Activated CD4-positive, alpha-beta T cell treated with anti-CD3 and anti-CD28 coated beads, Interleukin-2, amount 10 ng/mL, durations not matched to agents 24 days and 14 days (primary cell): ENCODE measurements at regions of chr11 and their contacts with region 1.

Region 1: DNA sequence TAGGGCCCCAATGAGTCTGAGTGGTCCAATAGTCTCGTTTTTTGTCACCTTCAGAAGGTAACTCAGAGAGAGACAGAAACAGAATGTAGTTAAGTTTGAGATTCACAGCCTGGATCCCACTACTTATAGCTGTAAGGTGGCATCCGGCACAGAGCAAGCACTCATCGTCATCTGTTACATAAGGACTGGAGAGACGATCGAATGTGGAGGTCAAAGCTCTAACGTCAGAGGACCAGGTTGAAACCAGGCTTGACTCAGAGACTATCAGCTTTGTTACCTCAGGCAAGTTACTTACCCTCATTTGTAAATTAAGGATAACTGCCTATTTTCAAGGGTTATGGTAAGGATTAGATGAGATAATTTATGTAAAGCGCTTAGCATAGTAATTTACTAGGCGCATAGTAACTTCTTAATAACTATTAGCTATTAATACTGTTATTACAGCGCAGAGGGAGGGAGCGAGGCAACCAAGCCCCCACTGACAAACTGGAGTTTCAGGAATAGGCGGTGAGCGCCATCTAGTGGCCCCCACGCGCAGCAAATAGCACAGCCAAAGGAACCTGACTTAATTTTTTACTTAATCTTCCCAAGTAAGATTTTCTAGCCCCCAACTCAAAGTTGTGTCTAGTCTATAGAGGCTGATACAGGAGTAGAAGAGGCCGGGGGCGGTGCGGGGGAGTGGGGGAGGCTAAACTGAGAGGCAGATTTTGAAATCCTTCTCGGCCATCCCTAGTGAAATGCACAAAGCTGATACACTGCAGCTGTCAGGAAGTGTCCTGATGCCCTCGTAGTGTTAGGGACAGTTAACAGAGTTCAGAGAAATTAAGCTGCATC is 29.0 kb upstream of the API5 start:
- DNase-seq: peak; percentile 79
- H3K4me3 Mint-ChIP-seq: no peak overlapping the region
- H3K27ac Mint-ChIP-seq: no peak overlapping the region
- H3K4me1 Mint-ChIP-seq: no peaks in the 10 kb centered on the region
- H3K27me3 Mint-ChIP-seq: peaks cover 4% of the 10 kb centered on the region

Region 2: DNA sequence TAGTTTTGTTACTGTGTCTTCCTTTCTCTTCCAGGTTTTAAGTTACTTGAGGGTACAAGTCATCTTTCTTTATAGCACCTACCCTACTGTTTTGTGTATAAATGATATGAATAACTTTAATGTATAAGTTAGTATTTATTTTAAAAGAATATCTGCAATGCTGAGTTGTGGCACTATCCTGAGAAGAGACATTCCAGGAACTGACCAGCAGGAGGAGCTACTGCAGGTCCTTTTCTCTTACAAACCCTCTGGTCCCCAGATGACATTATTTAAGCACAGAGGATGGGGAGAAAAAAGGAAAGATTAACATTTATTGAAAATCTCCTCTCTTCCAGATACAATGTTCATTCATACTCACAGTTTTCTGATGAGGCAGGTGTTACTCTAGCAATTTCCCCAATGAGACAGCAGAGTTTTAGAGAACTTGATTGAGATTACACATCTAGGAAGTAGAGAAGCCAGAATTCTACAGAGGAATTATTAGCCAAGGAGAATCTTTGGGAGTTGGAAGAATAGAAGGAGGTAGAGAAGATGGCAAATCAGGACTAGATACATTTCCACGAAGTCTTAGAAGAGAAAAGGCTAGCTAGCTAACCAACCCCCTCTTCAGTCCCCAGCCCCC is 512.3 kb before region 1 on chr11:
- intact Hi-C with region 1: loop called (anchors 2 kb)
- DNase-seq: peak; percentile 54
- H3K4me3 Mint-ChIP-seq: no peak overlapping the region
- H3K27ac Mint-ChIP-seq: no peak overlapping the region
- H3K4me1 Mint-ChIP-seq: no peaks in the 10 kb centered on the region
- H3K27me3 Mint-ChIP-seq: no peaks in the 10 kb centered on the region

Region 3: DNA sequence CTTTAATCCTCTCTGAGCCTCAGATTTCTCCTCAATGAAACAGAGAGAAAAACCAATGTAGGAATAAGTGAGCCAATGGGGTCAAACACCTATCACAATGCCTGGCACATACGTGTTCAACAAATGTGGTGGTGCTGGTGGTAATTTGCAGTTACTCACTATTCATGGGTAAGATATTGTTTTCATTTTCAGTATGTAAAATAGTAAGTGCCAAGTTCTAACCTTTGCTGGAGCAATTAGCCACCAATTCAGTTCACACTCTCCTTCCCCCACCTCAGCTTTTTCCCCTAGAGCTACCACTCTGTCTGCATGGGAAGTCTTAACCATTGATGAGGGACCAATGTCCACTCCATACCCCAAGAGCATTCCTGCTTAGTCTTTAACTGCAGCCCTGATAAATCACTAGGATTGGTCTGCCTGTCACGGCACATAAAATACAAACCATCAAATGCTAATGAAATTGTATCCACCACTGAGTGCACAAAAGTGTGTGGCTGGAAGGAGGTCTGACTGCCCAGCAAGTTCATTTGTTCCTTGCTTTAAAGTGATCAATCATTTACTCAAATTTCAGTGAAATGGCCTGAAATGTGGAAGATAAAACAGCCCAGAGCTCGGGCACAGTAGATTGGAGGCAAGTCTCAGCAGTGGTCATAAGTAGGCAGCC is 158.4 kb before region 1 on chr11:
- intact Hi-C with region 1: loop called (anchors 10 kb)
- DNase-seq: no peak
- H3K4me3 Mint-ChIP-seq: no peak overlapping the region
- H3K27ac Mint-ChIP-seq: no peak overlapping the region
- H3K4me1 Mint-ChIP-seq: no peaks in the 10 kb centered on the region
- H3K27me3 Mint-ChIP-seq: no peaks in the 10 kb centered on the region